CD4-positive, alpha-beta T cell (primary cell): ENCODE measurements at regions of chr17 and their contacts with region 1.

Region 1: GRCh38 chr17:39244600-39245570 is 19.1 kb upstream of the STAC2 start:
- DNase-seq: peak; percentile 78 to 94 (median 85)
- ATAC-seq: peak; percentile 96
- H3K4me3 ChIP-seq: no peak overlapping the region
- H3K4me3 Mint-ChIP-seq: peak overlapping the region; percentile 31
- H3K27ac ChIP-seq: no peak overlapping the region
- H3K27ac Mint-ChIP-seq: peak overlapping the region; percentile 53
- H3K4me1 ChIP-seq: peaks cover 15% of the 10 kb centered on the region
- H3K4me1 Mint-ChIP-seq: peaks cover 9% of the 10 kb centered on the region
- H3K27me3 ChIP-seq: no peaks in the 10 kb centered on the region
- H3K27me3 Mint-ChIP-seq: peaks cover 4% of the 10 kb centered on the region
- CTCF ChIP-seq: peak; percentile 94

Region 2: DNA sequence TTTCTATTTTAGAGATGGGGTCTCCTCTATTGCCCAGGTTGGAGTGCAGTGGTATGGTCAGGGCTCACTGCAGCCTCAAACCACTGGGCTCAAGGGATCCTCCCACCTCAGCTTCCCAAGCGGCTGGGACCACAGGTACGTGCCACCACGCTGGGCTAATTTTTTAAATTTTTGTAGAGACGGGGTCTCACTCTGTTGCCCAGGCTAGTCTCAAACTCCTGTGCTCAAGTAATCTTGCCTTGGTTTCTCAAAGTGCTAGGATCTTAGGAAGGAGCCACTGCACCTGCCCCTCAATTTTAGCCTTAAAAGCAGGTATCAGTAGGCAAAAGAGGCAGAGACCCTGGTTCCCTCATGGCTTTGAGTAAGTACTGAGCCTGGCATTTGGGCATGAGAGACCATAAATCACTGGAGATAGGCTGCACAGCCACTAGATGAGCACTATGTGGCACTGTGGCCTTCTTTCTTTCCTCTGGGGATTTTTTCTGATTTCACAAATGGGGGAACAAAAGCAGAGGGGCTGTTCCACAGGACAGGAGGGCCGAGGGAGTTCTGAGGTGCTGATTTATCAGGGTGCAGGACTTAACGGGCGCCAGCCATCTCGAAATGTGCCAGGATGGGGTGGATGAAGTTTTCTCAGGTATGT is 175.7 kb before region 1 on chr17:
- CTCF ChIA-PET with region 1: no interaction called
- POLR2A ChIA-PET with region 1: no interaction called
- intact Hi-C with region 1: loop called in 1 of 2 experiments (anchors 1 kb)
- DNase-seq: peak in 4 of 14 experiments; percentile 45 to 70 (median 66)
- ATAC-seq: peak; percentile 97
- H3K4me3 ChIP-seq: no peak overlapping the region
- H3K4me3 Mint-ChIP-seq: no peak overlapping the region
- H3K27ac ChIP-seq: no peak overlapping the region
- H3K27ac Mint-ChIP-seq: no peak overlapping the region
- H3K4me1 ChIP-seq: peaks cover 7% of the 10 kb centered on the region
- H3K4me1 Mint-ChIP-seq: peaks cover 6% of the 10 kb centered on the region
- H3K27me3 ChIP-seq: no peaks in the 10 kb centered on the region
- H3K27me3 Mint-ChIP-seq: no peaks in the 10 kb centered on the region
- CTCF ChIP-seq: peak; percentile 72

Region 3: DNA sequence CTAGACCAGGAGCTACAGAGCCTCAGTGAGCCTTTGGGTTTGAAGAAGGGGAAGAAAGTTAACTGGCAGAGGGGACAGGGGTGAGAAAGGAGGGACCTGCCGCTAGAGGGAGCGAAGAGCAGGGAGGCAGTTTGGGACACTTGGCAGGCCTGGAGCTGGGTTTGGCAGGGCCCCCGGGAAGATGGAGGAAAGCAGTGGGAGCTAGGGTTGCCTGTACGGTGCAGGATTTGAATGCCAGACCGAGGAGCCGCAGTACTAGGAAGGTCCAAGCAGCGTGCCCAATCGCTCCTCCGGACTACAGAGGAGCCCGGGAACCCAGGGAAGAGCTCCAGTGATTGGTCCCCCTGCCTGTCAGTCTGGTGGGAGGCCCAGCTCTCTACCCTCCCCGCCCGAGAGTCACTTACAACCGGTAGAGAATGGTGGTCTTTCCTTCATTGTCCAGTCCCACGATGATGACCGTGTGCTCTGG is 80.2 kb before region 1 on chr17:
- CTCF ChIA-PET with region 1: interaction called, 8 read pairs
- POLR2A ChIA-PET with region 1: interaction called, 3 read pairs
- intact Hi-C with region 1: loop called in 1 of 2 experiments (anchors 2 kb)
- DNase-seq: peak; percentile 56 to 85 (median 63)
- ATAC-seq: peak; percentile 86
- H3K4me3 ChIP-seq: peak overlapping the region; percentile 60
- H3K4me3 Mint-ChIP-seq: peak overlapping the region; percentile 90
- H3K27ac ChIP-seq: no peak overlapping the region
- H3K27ac Mint-ChIP-seq: no peak overlapping the region
- H3K4me1 ChIP-seq: peaks cover 32% of the 10 kb centered on the region
- H3K4me1 Mint-ChIP-seq: peaks cover 27% of the 10 kb centered on the region
- H3K27me3 ChIP-seq: peaks cover 17 to 22% of the 10 kb centered on the region in 2 experiments
- H3K27me3 Mint-ChIP-seq: peaks cover 34% of the 10 kb centered on the region
- CTCF ChIP-seq: peak; percentile 94

Region 4: DNA sequence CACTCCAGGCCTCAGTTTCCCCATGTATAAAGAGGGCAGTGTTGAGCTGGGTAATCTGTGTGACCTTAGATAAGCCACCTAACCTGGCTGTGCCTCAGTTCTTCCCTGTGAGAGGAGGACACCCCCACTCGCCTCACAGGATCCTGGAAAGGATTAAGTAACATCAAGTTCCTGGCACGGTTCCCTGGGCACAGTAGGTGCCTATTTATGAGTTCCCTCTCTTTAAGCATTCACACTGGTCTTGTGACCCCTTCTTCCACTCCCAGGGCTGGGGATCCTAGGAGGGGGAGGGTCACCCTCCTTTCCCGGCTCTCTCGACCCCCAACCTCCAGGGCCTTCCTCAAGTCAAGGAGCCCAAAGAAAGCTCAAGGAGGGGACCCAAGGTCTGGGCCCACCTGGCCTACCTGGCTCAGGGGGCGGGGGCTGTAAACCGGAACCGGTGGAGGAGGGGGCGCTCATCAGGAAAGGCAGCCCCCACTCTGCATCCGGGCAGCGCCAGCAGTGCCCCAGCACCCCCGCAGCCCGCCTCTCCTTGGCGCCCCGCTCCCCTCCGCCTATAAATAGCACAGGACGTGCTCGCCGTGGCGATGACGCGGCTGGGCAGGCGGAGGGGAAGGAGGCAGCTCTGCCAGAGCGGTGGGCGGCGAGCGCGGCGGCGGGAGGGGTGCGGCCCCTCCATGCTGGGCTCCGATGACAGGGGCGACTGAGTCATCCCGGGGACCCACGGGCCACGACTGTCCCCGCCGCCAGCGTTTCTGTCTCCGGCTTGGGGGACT is 35.4 kb before region 1 on chr17:
- CTCF ChIA-PET with region 1: interaction called, 122 read pairs
- POLR2A ChIA-PET with region 1: interaction called, 49 read pairs
- intact Hi-C with region 1: loop called (anchors 1 kb)
- DNase-seq: peak; percentile 32 to 89 (median 62)
- ATAC-seq: peak; percentile 74
- H3K4me3 ChIP-seq: peak overlapping the region; percentile 55
- H3K4me3 Mint-ChIP-seq: no peak overlapping the region
- H3K27ac ChIP-seq: peak overlapping the region in 1 of 2 donors; percentile 7
- H3K27ac Mint-ChIP-seq: peak overlapping the region; percentile 62
- H3K4me1 ChIP-seq: peaks cover 36% of the 10 kb centered on the region
- H3K4me1 Mint-ChIP-seq: peaks cover 29% of the 10 kb centered on the region
- H3K27me3 ChIP-seq: no peaks in the 10 kb centered on the region
- H3K27me3 Mint-ChIP-seq: no peaks in the 10 kb centered on the region
- CTCF ChIP-seq: no peak